Mammary epithelial cell (primary cell): ENCODE measurements at regions of chr12 and their contacts with region 1.

Region 1: DNA sequence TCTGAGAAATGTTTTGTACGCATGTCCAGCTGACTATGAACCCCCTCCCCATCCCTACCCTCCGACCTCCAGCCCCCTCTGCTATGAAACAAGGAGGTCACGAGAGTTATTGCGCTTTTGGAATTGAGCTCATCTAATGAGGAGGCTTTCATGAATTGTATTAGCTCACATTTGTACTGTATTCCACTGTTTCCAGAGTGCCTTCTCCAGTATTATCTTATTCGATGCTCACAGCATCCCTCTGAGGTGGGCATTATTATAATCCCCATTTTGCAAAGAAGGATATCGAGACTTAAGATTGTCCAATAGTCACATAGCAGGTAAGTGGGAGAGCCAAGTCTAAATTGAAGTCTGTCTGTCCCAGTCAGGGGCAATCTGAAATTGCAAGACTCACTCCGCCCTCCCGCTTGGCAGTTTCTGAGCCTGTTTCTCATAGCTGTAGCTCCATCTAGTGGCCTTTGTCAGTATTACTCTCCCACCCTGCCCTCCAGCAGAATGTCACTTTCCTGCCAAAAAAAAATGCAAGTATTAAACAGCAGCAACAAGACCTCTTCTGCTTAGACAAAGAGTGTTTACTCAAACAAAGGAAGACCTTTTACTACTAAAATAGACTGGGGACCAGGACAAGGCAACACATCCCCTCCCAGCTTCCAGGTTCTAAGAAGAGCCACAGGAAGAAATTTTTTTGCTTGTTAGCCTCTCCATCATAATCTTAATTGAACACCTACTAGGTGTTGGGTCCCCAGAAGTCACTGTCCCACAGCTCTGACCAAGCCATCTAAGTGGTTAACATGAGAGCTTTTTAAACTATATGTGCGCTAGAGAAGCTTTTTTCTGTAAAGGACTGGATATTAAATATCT is 48.6 kb upstream of the TMEM233 start:
- DNase-seq: peak; percentile 40
- H3K4me3 ChIP-seq: no peak overlapping the region
- H3K27ac ChIP-seq: no peak overlapping the region
- H3K4me1 ChIP-seq: no peaks in the 10 kb centered on the region
- H3K27me3 ChIP-seq: no peaks in the 10 kb centered on the region
- CTCF ChIP-seq: peak; percentile 63 to 80

Region 2: DNA sequence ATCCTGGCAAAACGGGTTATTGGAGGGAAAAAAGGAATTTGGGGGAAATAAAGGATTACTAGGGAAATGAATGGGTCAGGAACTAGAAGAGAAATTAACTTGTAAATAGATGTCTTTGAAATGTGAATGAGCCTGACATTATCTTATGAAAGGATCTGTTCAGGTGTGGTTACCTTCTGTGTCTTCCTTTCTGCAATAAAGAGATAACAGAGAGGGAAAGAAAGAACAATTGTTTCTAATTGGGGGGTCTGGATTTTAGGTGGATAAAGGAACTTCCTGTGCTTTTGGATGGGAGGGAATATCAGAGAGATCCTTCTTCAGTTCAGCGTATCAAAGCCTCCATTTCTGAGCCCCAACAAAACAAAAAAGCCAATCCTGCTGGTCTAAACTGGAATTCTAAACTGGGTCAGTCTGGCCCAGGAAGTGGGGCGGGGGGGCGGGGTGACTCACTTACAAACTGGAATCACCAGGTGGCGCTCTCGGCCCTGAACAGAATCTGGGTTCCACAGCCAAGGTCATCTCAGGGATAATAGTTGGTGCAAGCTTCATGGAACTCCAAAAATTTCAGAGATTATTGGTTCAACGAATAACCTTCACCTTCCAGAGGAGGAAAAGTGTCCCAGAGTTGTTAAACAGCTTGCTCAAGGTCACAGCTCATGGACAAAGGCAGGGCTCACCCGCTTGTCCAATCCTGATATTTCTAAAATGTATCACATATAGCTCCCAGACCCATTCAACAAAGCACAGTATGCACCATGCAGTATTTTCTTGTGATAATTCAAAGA is 1424.2 kb before region 1 on chr12:
- CTCF ChIA-PET with region 1: no interaction called
- dilution Hi-C with region 1: no loop called
- in situ Hi-C with region 1: no loop called
- intact Hi-C with region 1: loop called (anchors 1 kb)
- DNase-seq: peak; percentile 40
- H3K4me3 ChIP-seq: no peak overlapping the region
- H3K27ac ChIP-seq: no peak overlapping the region
- H3K4me1 ChIP-seq: peaks cover 3% of the 10 kb centered on the region
- H3K27me3 ChIP-seq: no peaks in the 10 kb centered on the region
- CTCF ChIP-seq: peak; percentile 37 to 64

Region 3: DNA sequence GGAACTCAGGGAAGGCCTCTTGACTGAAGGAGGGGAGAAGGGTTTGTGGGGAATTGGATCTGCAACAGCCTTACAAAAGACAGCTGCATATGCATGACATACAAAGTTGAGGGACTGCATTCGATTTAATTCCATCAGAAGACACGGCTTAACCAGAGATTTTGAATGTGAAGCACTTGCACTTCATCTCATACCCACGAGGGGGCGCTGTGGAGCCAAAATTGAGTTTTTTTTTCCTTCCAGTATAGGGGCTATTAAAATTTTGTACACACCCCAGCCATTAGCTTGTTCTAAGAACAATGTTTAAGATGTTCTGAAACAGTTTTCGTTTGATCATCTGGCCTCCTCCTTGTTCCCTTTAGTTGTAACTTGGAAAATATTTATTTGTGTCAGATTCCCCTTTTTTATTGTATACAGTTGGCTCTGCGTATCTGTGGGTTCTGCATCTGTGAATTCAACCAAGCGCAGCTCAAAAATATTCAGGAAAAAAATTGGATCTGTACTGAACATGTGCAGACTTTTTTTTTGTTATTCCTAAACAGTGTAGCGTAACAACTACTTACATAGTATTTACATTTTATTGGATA is 1167.0 kb before region 1 on chr12:
- CTCF ChIA-PET with region 1: interaction called, 4 read pairs
- dilution Hi-C with region 1: no loop called
- in situ Hi-C with region 1: no loop called
- intact Hi-C with region 1: loop called (anchors 1 kb)
- DNase-seq: peak; percentile 46
- H3K4me3 ChIP-seq: peak overlapping the region; percentile 76 to 89 (median 79)
- H3K27ac ChIP-seq: no peak overlapping the region
- H3K4me1 ChIP-seq: peaks cover 26% of the 10 kb centered on the region
- H3K27me3 ChIP-seq: no peaks in the 10 kb centered on the region
- CTCF ChIP-seq: peak; percentile 80 to 85

Region 4: DNA sequence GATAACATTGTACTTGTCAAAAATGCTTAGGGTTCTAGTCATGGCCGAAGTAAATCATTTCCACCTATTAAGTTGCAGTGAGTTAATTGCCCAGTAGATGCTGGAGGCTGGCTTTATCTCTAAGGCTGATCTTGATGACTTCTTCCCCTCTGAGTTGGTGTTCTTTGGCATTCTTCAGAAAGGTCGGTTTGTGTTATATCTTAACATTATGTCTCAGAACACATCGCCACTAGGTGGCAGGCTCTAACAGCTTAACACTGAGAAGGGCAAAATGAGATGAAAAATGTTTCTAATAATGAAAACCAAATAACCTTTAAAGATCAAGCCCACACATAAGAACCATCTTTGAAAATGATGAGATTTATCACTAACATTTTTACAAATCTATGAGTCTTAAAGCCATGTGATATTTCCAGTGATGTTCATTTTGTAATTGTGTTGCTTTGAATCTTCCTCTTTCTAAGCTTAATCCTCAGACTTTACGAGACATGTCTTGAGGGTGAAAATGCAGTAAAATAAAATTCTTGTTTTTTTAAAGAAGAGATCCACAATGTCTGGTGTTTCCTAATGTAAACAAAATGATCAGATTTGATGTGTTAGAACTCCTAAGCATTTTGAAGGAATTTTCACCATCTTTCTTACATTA is 1140.0 kb before region 1 on chr12:
- CTCF ChIA-PET with region 1: no interaction called
- dilution Hi-C with region 1: no loop called
- in situ Hi-C with region 1: loop called (anchors 10 to 25 kb)
- intact Hi-C with region 1: loop called (anchors 1 kb)
- DNase-seq: peak; percentile 45
- H3K4me3 ChIP-seq: no peak overlapping the region
- H3K27ac ChIP-seq: no peak overlapping the region
- H3K4me1 ChIP-seq: no peaks in the 10 kb centered on the region
- H3K27me3 ChIP-seq: no peaks in the 10 kb centered on the region
- CTCF ChIP-seq: peak; percentile 74 to 81

Region 5: DNA sequence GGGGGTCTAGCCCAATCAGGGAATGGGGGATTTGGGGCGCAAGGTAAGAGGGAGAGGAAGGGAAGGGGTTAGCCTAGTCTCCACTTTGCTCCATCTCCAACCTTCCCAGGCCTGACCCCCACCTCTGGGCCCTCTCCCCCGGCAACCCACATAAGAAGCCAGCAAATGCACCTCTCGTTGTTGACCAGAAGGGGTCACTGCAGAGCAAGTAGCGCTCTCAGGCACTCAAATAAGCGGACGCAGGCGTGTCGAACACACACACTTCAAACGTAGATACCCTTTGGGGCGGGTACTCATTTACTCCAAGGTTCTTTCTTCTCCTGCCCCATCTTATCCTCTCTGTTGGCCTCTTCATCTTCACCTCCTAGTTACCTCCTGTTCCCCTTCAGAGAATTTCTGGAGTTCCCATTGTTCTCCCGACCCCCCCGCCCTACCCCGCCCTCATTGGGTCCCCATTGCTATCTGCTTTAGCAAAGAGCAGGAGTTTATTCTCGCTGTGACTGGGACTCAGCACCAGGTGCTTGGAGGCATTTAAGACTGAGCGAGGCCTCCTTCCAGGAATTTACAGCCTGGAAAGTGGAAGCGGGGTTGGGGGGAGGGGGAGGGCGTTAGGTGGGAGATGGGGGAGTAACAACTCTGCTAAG is 565.1 kb before region 1 on chr12:
- CTCF ChIA-PET with region 1: no interaction called
- dilution Hi-C with region 1: no loop called
- in situ Hi-C with region 1: no loop called
- intact Hi-C with region 1: loop called (anchors 5 kb)
- DNase-seq: peak; percentile 5
- H3K4me3 ChIP-seq: no peak overlapping the region
- H3K27ac ChIP-seq: no peak overlapping the region
- H3K4me1 ChIP-seq: no peaks in the 10 kb centered on the region
- H3K27me3 ChIP-seq: no peaks in the 10 kb centered on the region
- CTCF ChIP-seq: peak; percentile 49 to 67

Region 6: GRCh38 chr12:119463211-119463926 is 81.6 kb before region 1 on chr12:
- CTCF ChIA-PET with region 1: no interaction called
- dilution Hi-C with region 1: no loop called
- in situ Hi-C with region 1: no loop called
- intact Hi-C with region 1: no loop called
- DNase-seq: no peak
- H3K4me3 ChIP-seq: no peak overlapping the region
- H3K27ac ChIP-seq: no peak overlapping the region
- H3K4me1 ChIP-seq: no peaks in the 10 kb centered on the region
- H3K27me3 ChIP-seq: no peaks in the 10 kb centered on the region
- CTCF ChIP-seq: no peak